A673 (cell line): ENCODE measurements at regions of chr15 and their contacts with region 1.

Region 1: GRCh38 chr15:79009379-79009778 is 64.5 kb upstream of the CTSH start:
- DNase-seq: no peak
- H3K4me3 ChIP-seq: no peak overlapping the region
- H3K27ac ChIP-seq: no peak overlapping the region
- H3K4me1 ChIP-seq: peaks cover 7% of the 10 kb centered on the region
- H3K27me3 ChIP-seq: no peaks in the 10 kb centered on the region
- CTCF ChIP-seq: no peak

Region 2: DNA sequence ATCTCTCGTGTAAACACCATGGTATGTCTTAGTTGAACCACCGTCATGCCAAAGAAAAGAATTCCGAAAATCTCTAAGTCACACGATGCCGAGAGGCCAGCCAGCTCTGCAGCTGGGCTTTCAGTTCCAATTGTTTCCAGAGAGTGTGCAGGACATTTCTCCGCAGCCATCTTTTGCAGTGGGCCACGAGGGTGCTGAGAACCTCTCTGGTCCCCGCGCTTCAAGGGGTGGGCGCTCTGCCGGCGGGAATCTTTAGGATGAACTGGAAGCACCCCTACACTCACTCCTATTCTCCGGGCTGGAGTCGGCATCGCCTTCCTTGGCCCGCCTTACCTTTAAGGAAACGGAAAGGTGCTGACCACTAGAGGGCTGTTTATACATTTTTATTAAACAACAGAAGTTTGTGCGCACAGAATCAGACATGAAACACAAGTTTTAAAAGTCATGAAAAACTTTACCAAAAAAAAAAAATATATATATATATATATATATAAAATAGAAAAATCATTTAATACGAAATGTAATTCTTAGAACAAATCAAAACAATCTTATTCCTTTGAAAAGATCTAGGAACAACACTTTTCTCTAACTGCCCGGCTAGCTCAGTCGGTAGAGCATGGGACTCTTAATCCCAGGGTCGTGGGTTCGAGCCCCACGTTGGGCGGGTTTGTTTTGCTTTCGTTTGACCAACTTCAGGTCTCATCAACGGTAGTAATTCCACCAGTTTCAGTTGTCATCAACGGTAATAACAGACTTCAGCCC is 149.2 kb before region 1 on chr15:
- CTCF ChIA-PET with region 1: no interaction called
- POLR2A ChIA-PET with region 1: no interaction called
- intact Hi-C with region 1: no loop called
- DNase-seq: peak; percentile 92
- H3K4me3 ChIP-seq: peak overlapping the region; percentile 64
- H3K27ac ChIP-seq: peak overlapping the region; percentile 69
- H3K4me1 ChIP-seq: no peaks in the 10 kb centered on the region
- H3K27me3 ChIP-seq: no peaks in the 10 kb centered on the region
- CTCF ChIP-seq: peak; percentile 66

Region 3: GRCh38 chr15:78985859-78986475 is 23.4 kb before region 1 on chr15:
- CTCF ChIA-PET with region 1: interaction called, 5 read pairs
- POLR2A ChIA-PET with region 1: interaction called, 14 read pairs
- intact Hi-C with region 1: no loop called
- DNase-seq: no peak
- H3K4me3 ChIP-seq: no peak overlapping the region
- H3K27ac ChIP-seq: no peak overlapping the region
- H3K4me1 ChIP-seq: no peaks in the 10 kb centered on the region
- H3K27me3 ChIP-seq: no peaks in the 10 kb centered on the region
- CTCF ChIP-seq: no peak

Region 4: DNA sequence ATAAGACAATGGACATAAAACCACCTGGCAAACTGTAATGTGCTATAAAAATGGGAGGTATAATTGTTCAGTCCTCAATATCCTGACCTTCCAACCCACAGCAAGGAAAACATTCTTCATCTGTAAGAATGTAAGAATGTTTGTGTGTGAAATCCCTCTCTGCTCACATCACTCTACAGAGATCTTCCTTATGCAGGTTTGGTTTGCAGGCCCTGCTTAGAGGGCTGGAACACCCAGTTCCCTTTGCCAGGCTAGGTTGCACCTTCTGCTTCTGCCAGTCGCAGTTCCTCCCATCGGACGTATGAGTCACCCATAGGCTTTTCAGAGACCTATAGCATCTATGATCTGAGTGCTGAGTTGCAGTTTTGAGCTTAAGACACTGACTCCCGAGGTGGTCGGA is 398.7 kb after region 1 on chr15:
- CTCF ChIA-PET with region 1: no interaction called
- POLR2A ChIA-PET with region 1: no interaction called
- intact Hi-C with region 1: no loop called
- DNase-seq: no peak
- H3K4me3 ChIP-seq: no peak overlapping the region
- H3K27ac ChIP-seq: no peak overlapping the region
- H3K4me1 ChIP-seq: no peaks in the 10 kb centered on the region
- H3K27me3 ChIP-seq: no peaks in the 10 kb centered on the region
- CTCF ChIP-seq: no peak